PC-9 (cell line): ENCODE measurements at regions of chr3 and their contacts with region 1.

Region 1: GRCh38 chr3:58630076-58630709 is 36.4 kb downstream of the FAM3D start:
- DNase-seq: peak; percentile 40 to 61
- H3K4me3 ChIP-seq: no peak overlapping the region
- H3K27ac ChIP-seq: no peak overlapping the region
- H3K4me1 ChIP-seq: peaks cover 8% of the 10 kb centered on the region; the same call in 1 of the 2 replicates
- H3K27me3 ChIP-seq: no peaks in the 10 kb centered on the region
- CTCF ChIP-seq: peak; percentile 96

Region 2: DNA sequence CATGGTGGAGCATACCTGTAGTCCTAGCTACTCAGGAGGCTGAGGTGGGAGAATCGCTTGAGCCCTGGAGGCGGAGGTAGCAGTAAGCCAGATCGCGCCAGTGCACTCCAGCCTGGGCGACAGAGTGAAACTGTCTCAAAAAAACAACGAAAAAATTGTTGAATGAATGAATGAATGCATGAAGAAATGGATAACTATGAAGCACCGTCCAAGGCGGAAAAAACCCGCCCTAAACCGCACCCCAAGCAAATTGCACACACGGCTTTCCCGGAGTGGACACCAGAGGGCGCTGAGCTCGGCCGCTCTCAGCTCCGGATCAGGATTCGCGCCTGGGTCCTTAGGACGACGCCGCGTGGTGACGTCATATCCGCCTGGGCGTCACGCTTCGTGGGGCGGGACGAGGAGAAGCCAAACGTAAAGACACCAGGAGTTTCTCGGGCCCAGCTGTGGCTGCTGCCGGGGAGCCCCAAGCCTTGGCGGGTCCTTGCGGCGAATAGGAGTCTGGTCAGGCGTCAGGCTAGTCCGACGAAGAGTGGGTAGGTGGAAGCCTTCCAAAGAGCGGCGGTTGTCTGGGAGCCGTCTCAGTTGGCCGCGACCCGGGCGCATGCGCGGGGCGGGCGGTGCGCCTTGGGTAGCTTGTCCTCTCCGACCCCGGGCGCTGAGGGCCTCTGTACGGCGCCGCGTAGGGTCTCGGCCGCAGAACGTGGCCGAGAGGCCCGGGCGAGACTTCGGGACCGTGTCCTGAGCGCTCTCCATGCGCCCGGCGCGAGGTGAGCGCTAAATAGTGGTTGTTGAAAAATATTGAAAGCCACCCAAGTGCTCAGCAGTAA is 324.1 kb before region 1 on chr3 and contains the starts of genes HTD2 and RPP14:
- CTCF ChIA-PET with region 1: interaction called, 3 read pairs
- POLR2A ChIA-PET with region 1: no interaction called
- intact Hi-C with region 1: loop called (anchors 1 kb)
- DNase-seq: peak; percentile 86 to 95
- H3K4me3 ChIP-seq: peak within 1 kb of the TSS; percentile 91
- H3K27ac ChIP-seq: peak within 1 kb of the TSS; percentile 79
- H3K4me1 ChIP-seq: peaks cover 12% of the 10 kb centered on the region
- H3K27me3 ChIP-seq: no peaks in the 10 kb centered on the region
- CTCF ChIP-seq: peak; percentile 85
- total RNA-seq, gene HTD2: 6.2 and 7.4 TPM in 2 replicates
- total RNA-seq, gene RPP14: 13.2 and 13.8 TPM in 2 replicates

Region 3: GRCh38 chr3:58324391-58325390 is 305.5 kb before region 1 on chr3:
- CTCF ChIA-PET with region 1: no interaction called
- POLR2A ChIA-PET with region 1: no interaction called
- intact Hi-C with region 1: loop called (anchors 5 kb)
- DNase-seq: no peak
- H3K4me3 ChIP-seq: no peak overlapping the region
- H3K27ac ChIP-seq: no peak overlapping the region
- H3K4me1 ChIP-seq: no peaks in the 10 kb centered on the region
- H3K27me3 ChIP-seq: no peaks in the 10 kb centered on the region
- CTCF ChIP-seq: no peak

Region 4: GRCh38 chr3:58414538-58415197 is 215.5 kb before region 1 on chr3:
- CTCF ChIA-PET with region 1: no interaction called
- POLR2A ChIA-PET with region 1: no interaction called
- intact Hi-C with region 1: loop called (anchors 10 kb)
- DNase-seq: peak; percentile 34 to 50
- H3K4me3 ChIP-seq: no peak overlapping the region
- H3K27ac ChIP-seq: no peak overlapping the region
- H3K4me1 ChIP-seq: peaks cover 5% of the 10 kb centered on the region; the same call in 1 of the 2 replicates
- H3K27me3 ChIP-seq: no peaks in the 10 kb centered on the region
- CTCF ChIP-seq: peak; percentile 82

Region 5: GRCh38 chr3:58568572-58569286 is 61.5 kb before region 1 on chr3:
- CTCF ChIA-PET with region 1: interaction called, 9 read pairs
- POLR2A ChIA-PET with region 1: no interaction called
- intact Hi-C with region 1: loop called (anchors 1 kb)
- DNase-seq: peak; percentile 48 to 73
- H3K4me3 ChIP-seq: no peak overlapping the region
- H3K27ac ChIP-seq: no peak overlapping the region
- H3K4me1 ChIP-seq: peaks cover 4% of the 10 kb centered on the region; the same call in 1 of the 2 replicates
- H3K27me3 ChIP-seq: no peaks in the 10 kb centered on the region
- CTCF ChIP-seq: peak; percentile 91

Region 6: DNA sequence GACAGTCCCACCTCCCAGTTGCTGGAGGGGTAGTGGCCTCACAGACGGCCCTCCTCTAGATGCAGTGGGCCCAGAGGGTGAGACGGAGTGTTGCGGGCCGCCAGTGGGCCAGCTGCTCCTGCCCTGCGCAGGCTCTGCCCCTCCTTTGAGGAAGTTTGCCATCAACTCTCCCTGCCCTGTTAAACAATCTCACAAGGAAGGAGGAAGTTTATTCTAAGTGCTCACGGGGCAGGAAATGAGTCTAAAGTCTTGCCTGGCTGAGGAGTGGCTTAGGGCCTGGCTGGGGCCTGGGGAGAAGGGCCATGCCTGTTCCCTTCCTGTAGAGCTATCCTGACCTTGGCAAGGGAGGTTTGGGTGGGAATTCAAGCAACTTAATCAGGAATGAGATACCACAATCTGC is 36.5 kb after region 1 on chr3 and contains the start of gene FAM3D:
- CTCF ChIA-PET with region 1: no interaction called
- POLR2A ChIA-PET with region 1: no interaction called
- intact Hi-C with region 1: no loop called
- DNase-seq: no peak
- H3K4me3 ChIP-seq: no peak within 1 kb of the TSS
- H3K27ac ChIP-seq: no peak within 1 kb of the TSS
- H3K4me1 ChIP-seq: no peaks in the 10 kb centered on the region
- H3K27me3 ChIP-seq: peaks cover 33% of the 10 kb centered on the region
- CTCF ChIP-seq: no peak
- total RNA-seq, gene FAM3D: not detected in 2 replicates